Activated CD8-positive, alpha-beta T cell treated with anti-CD3 and anti-CD28 coated beads, Interleukin-2, amount 10 ng/mL, durations not matched to agents 7 days and 5 days (primary cell): ENCODE measurements at regions of chr1 and their contacts with region 1.

Region 1: GRCh38 chr1:115052454-115053083 is 22.9 kb downstream of the TSHB start:
- DNase-seq: peak; percentile 66
- ATAC-seq: peak; percentile 84
- H3K4me3 Mint-ChIP-seq: no peak overlapping the region
- H3K27ac Mint-ChIP-seq: no peak overlapping the region
- H3K4me1 Mint-ChIP-seq: peaks cover 5% of the 10 kb centered on the region
- H3K27me3 Mint-ChIP-seq: peaks cover 7% of the 10 kb centered on the region

Region 2: DNA sequence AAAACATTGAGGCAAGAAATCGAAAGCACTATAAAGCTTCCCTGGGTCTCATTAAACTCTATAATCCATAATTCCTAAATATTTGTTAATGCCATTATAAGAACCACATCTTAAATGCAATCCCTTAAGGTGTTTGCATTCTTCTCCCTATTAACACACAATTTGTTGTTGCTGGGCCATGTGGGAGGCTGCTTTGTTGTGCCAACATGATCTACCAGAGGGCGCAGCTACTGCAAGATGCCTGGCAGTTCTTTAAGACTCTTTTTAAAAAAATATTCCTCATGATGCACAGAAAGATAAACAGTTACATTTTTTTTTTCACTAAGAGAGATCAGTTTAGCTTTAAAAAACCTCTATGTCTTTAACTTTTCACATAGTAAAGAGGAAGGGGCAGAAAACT is 432.1 kb before region 1 on chr1:
- CTCF ChIA-PET with region 1: no interaction called
- POLR2A ChIA-PET with region 1: no interaction called
- DNase-seq: no peak
- ATAC-seq: no peak
- H3K4me3 Mint-ChIP-seq: no peak overlapping the region
- H3K27ac Mint-ChIP-seq: no peak overlapping the region
- H3K4me1 Mint-ChIP-seq: no peaks in the 10 kb centered on the region
- H3K27me3 Mint-ChIP-seq: peaks cover 8% of the 10 kb centered on the region

Region 3: GRCh38 chr1:114745291-114745690 is 307.3 kb before region 1 on chr1:
- CTCF ChIA-PET with region 1: no interaction called
- POLR2A ChIA-PET with region 1: no interaction called
- DNase-seq: no peak
- ATAC-seq: no peak
- H3K4me3 Mint-ChIP-seq: no peak overlapping the region
- H3K27ac Mint-ChIP-seq: no peak overlapping the region
- H3K4me1 Mint-ChIP-seq: peaks cover 41% of the 10 kb centered on the region
- H3K27me3 Mint-ChIP-seq: no peaks in the 10 kb centered on the region

Region 4: GRCh38 chr1:114979278-114979891 is 73.2 kb before region 1 on chr1:
- CTCF ChIA-PET with region 1: interaction called, 16 read pairs
- POLR2A ChIA-PET with region 1: no interaction called
- DNase-seq: peak; percentile 73
- ATAC-seq: no peak
- H3K4me3 Mint-ChIP-seq: no peak overlapping the region
- H3K27ac Mint-ChIP-seq: no peak overlapping the region
- H3K4me1 Mint-ChIP-seq: no peaks in the 10 kb centered on the region
- H3K27me3 Mint-ChIP-seq: peaks cover 4% of the 10 kb centered on the region

Region 5: DNA sequence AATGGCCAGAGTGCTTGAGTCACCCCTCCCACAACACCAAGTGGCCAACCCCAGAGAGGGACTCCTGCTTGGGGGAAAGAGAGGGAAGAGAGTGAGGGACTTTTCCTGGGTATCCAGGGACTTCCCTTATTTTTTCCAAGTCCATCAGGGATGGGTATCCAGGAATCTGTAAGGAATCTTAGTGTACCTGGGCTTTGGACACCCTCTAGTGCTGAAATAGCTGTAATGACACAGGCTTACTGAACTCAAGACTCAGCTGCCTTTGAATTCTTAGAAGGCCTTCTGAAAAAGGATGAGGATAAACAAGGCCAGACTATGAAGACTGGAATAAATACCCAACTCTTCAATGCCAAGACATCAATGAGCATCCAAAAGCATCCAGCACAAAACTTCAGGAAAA is 10.9 kb before region 1 on chr1:
- CTCF ChIA-PET with region 1: interaction called, 16 read pairs
- POLR2A ChIA-PET with region 1: no interaction called
- DNase-seq: no peak
- ATAC-seq: no peak
- H3K4me3 Mint-ChIP-seq: no peak overlapping the region
- H3K27ac Mint-ChIP-seq: no peak overlapping the region
- H3K4me1 Mint-ChIP-seq: no peaks in the 10 kb centered on the region
- H3K27me3 Mint-ChIP-seq: no peaks in the 10 kb centered on the region

Region 6: GRCh38 chr1:115098979-115099692 is 46.6 kb after region 1 on chr1:
- CTCF ChIA-PET with region 1: interaction called, 19 read pairs
- POLR2A ChIA-PET with region 1: interaction called, 4 read pairs
- DNase-seq: peak; percentile 84
- ATAC-seq: peak; percentile 89
- H3K4me3 Mint-ChIP-seq: peak overlapping the region; percentile 82
- H3K27ac Mint-ChIP-seq: peak overlapping the region; percentile 97
- H3K4me1 Mint-ChIP-seq: peaks cover 27% of the 10 kb centered on the region
- H3K27me3 Mint-ChIP-seq: peaks cover 4% of the 10 kb centered on the region

Region 7: GRCh38 chr1:115112496-115113375 is 60.2 kb after region 1 on chr1:
- CTCF ChIA-PET with region 1: interaction called, 38 read pairs
- POLR2A ChIA-PET with region 1: no interaction called
- DNase-seq: peak; percentile 53
- ATAC-seq: peak; percentile 33
- H3K4me3 Mint-ChIP-seq: no peak overlapping the region
- H3K27ac Mint-ChIP-seq: no peak overlapping the region
- H3K4me1 Mint-ChIP-seq: peaks cover 2% of the 10 kb centered on the region
- H3K27me3 Mint-ChIP-seq: peaks cover 1% of the 10 kb centered on the region